ENCODE measurements at regions of chr9 and their contacts with region 1.

Region 1: GRCh38 chr9:26228273-26228672 is 550.0 kb upstream of the TUSC1 start:
- DNase-seq: no peak
- ATAC-seq: no peak
- H3K4me3 ChIP-seq: no peak overlapping the region
- H3K27ac ChIP-seq: no peak overlapping the region
- H3K4me1 ChIP-seq: no peaks in the 10 kb centered on the region
- H3K27me3 ChIP-seq: no peaks in the 10 kb centered on the region
- CTCF ChIP-seq: no peak

Region 2: GRCh38 chr9:26193237-26193636 is 35.0 kb before region 1 on chr9:
- intact Hi-C with region 1: loop called in 1 of 10 experiments (anchors 5 kb)
- DNase-seq: no peak
- ATAC-seq: no peak
- H3K4me3 ChIP-seq: no peak overlapping the region
- H3K27ac ChIP-seq: no peak overlapping the region
- H3K4me1 ChIP-seq: no peaks in the 10 kb centered on the region
- H3K27me3 ChIP-seq: no peaks in the 10 kb centered on the region
- CTCF ChIP-seq: no peak

Measured in heart right ventricle (tissue), 16 donors.